ENCODE measurements at regions of chr12 and their contacts with region 1.

Region 1: DNA sequence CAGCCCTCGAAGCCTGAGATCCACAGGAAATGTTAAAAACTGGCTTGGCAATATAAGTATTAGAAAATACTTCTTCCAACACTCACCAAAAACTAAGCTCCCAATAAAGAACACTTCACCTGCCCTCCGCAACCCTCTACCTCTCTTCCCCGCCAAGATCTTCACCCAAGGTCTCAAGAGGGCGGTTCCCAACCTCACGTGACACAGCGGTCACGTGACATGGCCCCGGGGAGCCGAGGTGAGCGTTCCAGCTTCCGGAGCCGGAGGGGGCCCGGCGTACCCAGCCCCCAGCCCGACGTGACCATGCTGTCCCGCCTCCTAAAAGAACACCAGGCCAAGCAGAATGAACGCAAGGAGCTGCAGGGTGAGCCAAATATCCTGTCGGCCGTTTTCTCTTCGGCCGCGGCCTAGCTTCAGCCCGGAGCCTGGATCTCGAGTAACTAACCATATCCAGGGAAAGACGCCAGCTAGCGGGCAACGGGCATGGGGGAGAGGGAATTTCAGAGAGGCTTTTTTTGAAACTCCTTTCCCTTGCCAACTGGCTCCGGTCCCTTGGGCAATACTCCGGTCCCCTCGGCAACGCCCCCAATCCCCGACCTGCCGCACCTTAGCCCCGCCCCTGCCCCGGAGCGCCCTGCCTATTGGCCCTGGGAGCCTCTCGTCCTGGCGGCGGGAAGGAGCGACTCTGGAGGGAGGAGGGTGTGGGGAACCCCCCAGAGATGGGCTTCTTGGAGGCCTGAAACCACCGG is at the start of gene BLOC1S1:
- DNase-seq: peak; percentile 81 to 93 (median 88)
- H3K4me3 ChIP-seq: peak within 1 kb of the TSS; percentile 65 to 98 (median 85)
- H3K27ac ChIP-seq: peak within 1 kb of the TSS; percentile 75 to 98 (median 95)
- H3K27me3 ChIP-seq: no peaks in the 10 kb centered on the region
- CTCF ChIP-seq: peak in 37 of 56 donors; percentile 4 to 53 (median 25)
- total RNA-seq, gene BLOC1S1: 73.5 to 149 (median 111) TPM

Region 2: DNA sequence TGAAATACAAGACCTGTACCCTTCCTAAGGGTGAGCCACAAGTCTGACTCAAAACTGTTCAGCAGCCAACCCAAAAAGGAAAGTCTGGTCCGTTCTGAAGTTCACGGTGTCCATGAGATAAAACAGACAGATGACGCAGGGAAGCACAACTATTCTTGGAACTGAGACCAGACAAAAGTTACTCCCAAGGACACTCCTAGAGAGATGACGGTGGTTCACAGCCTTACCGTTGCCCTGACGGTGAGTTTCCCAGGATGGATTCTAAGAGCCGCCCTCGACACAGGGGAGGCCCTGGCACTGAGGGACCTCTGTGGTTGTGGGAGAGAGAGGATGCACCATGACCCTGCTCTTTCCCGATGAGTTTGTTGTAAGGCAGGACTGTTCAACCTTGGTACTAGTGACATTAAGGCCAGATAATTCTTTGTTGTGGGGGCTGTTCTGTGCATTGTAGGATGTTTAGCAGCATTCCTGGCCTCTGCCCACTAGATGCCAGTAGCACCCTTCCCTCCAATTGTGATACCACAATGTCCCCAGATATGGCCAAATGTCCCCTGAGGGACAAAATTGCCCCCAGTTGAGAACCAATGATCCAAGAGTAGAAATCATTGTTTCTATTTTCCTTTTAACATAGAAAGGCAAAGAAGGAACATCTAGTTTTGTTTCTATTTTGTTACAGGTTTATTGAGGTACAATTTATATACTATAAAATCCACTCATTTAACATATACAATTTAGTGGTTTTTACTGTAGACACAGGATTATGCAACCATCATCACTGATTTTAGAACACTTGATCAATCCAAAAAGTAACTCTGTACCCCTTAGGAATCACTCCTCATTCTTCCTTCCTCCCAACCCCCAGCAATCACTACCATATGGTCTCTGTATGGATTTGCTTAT is 56.3 kb before region 1 on chr12:
- intact Hi-C with region 1: loop called (anchors 5 to 10 kb)
- DNase-seq: peak in 1 of 10 donors; percentile 4
- H3K4me3 ChIP-seq: no peak overlapping the region
- H3K27ac ChIP-seq: peak overlapping the region in 1 of 59 donors; percentile 44
- H3K27me3 ChIP-seq: no peaks in the 10 kb centered on the region
- CTCF ChIP-seq: peak in 46 of 56 donors; percentile 9 to 66 (median 38)

Region 3: DNA sequence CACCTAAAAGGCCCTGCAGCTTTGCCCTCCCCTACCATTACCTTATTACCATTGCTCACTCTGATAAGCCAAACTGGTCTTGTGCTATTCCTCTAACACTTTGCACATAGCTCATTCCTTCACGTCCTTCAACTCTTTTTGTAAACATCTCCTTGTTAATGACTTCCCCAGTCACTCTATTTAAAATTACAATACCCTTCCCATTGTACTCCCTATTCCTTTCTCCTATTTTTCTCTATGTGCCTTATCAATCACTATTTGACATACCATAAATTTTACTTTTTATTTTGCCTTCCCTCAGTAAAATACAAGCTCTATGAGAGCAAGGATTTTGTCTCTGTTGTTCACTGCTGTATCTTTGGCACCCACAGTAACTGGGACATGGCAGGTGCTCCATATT is 96.1 kb after region 1 on chr12:
- intact Hi-C with region 1: no loop called
- DNase-seq: no peak
- H3K4me3 ChIP-seq: no peak overlapping the region
- H3K27ac ChIP-seq: no peak overlapping the region
- H3K27me3 ChIP-seq: no peaks in the 10 kb centered on the region
- CTCF ChIP-seq: no peak

Measured in dorsolateral prefrontal cortex (tissue), 120 donors.